ENCODE measurements at regions of chr5 and their contacts with region 1.

Region 1: DNA sequence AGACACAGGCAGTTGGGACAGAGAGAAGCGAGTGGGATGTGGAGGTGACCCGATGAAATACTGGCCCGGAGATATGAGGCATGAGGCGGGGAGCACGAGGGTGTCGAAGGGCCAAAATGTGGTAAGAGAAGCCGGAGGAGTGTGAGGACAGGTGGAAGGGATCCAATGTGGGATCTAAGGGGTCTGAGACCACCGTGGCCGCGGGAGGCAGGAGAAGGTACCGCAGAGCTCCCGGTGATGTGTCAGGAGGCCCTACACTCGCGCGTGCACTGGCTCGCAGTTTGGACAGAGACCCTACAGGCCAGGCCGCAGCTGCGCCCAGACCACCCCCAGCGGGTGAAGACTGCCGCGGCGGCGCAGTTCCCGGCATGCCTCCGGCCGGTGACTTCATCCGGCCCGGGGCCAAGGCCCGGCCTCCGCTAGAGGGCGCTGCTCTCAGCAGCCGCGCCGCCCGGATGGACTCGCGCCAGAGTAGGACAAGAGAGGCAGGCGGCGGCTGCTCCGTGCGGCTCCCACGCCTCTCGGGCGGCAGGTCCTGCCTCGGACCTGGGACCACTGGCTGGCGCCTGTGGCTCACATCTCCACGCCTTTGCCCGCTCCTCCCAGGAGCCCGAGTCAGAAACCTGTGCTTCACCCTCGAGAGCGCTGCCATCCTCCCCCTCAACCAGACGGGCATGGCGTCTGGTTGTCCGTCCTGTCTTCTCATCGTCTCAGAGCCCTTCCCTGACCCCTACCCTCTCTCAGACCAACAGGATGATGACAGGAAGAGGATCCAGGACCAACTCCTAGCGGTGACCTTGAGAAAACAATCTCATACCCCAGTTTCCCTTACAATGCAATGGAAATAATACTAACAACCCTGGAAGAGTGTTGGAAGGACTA is 35.4 kb upstream of the STING1 start:
- DNase-seq: peak; percentile 70 to 97
- H3K4me3 ChIP-seq: peak overlapping the region in 3 of 4 experiments; percentile 30 to 55 (median 34); a peak in 6 of 8 replicates
- H3K27ac ChIP-seq: 0 out of 2 replicates have a peak overlapping the region, but pooled peaks have one; percentile 48
- H3K4me1 ChIP-seq: peaks cover 3 to 19% (median 6%) of the 10 kb centered on the region in 4 experiments; a peak in 6 of 7 replicates
- H3K27me3 ChIP-seq: no peaks in the 10 kb centered on the region; a peak in 1 of 7 replicates
- CTCF ChIP-seq: peak; percentile 92 to 97 (median 92)
- EP300 ChIP-seq: no peak; a peak in 1 of 3 replicates
- POLR2A ChIP-seq: peak in 1 of 2 experiments; percentile 94; a peak in 2 of 3 replicates
- RAD21 ChIP-seq: peak; percentile 56 to 78

Region 2: GRCh38 chr5:139371482-139372435 is 146.2 kb before region 1 on chr5:
- CTCF ChIA-PET with region 1: no interaction called
- POLR2A ChIA-PET with region 1: no interaction called
- DNase-seq: no peak
- H3K4me3 ChIP-seq: no peak overlapping the region
- H3K27ac ChIP-seq: no peak overlapping the region
- H3K4me1 ChIP-seq: no peaks in the 10 kb centered on the region
- H3K27me3 ChIP-seq: no peaks in the 10 kb centered on the region
- CTCF ChIP-seq: no peak
- EP300 ChIP-seq: no peak
- POLR2A ChIP-seq: no peak
- RAD21 ChIP-seq: no peak

Region 3: DNA sequence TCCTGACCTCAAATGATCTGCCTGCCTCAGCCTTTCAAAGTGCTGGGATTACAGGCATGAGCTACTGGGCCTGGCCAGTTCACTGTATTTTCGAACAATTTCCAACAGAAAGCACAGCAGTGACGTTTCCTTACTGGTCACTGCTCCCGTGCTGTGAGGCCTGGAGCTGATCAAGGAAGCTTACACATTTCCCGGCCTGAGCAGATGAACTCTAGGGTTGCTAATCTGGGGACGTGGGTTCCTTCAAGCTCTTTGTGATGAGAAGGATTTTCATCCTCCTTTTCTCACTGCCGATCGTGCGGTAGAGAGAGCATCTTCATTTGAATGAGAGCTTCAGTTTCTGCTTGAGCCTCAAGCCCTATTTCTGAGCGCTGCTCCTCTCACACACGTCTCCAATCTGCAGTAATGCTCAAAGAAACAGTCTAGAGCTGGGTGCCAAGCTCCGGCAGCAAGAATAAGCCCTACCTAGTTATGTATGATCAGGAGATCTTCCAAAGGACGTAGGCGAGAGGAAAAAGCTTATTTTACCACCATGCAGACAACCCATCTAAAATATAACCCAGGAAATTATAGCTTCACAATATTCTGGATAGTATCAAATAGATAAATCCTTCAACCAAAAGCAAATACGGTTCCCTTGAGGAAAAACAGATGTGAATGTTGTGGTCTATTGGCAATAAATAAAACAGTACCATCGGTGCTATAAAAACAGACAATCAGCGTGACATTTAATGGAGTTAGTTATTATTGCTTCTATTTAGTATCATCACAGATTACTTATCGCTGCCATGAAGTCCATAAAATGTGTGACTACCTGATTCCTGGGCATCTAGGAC is 106.7 kb before region 1 on chr5:
- CTCF ChIA-PET with region 1: interaction called, 25 read pairs
- POLR2A ChIA-PET with region 1: interaction called, 4 read pairs
- DNase-seq: no peak
- H3K4me3 ChIP-seq: no peak overlapping the region
- H3K27ac ChIP-seq: no peak overlapping the region
- H3K4me1 ChIP-seq: no peaks in the 10 kb centered on the region
- H3K27me3 ChIP-seq: 0 out of 7 replicates have a peak, but pooled peaks cover 0 to 4% (median 0%) of the 10 kb centered on the region in 4 experiments
- CTCF ChIP-seq: no peak
- EP300 ChIP-seq: no peak
- POLR2A ChIP-seq: no peak
- RAD21 ChIP-seq: no peak

Region 4: GRCh38 chr5:139430015-139430414 is 87.9 kb before region 1 on chr5:
- CTCF ChIA-PET with region 1: interaction called, 319 read pairs
- POLR2A ChIA-PET with region 1: interaction called, 3 read pairs
- DNase-seq: no peak
- H3K4me3 ChIP-seq: no peak overlapping the region
- H3K27ac ChIP-seq: no peak overlapping the region
- H3K4me1 ChIP-seq: no peaks in the 10 kb centered on the region
- H3K27me3 ChIP-seq: no peaks in the 10 kb centered on the region
- CTCF ChIP-seq: no peak
- EP300 ChIP-seq: no peak
- POLR2A ChIP-seq: no peak
- RAD21 ChIP-seq: no peak

Region 5: DNA sequence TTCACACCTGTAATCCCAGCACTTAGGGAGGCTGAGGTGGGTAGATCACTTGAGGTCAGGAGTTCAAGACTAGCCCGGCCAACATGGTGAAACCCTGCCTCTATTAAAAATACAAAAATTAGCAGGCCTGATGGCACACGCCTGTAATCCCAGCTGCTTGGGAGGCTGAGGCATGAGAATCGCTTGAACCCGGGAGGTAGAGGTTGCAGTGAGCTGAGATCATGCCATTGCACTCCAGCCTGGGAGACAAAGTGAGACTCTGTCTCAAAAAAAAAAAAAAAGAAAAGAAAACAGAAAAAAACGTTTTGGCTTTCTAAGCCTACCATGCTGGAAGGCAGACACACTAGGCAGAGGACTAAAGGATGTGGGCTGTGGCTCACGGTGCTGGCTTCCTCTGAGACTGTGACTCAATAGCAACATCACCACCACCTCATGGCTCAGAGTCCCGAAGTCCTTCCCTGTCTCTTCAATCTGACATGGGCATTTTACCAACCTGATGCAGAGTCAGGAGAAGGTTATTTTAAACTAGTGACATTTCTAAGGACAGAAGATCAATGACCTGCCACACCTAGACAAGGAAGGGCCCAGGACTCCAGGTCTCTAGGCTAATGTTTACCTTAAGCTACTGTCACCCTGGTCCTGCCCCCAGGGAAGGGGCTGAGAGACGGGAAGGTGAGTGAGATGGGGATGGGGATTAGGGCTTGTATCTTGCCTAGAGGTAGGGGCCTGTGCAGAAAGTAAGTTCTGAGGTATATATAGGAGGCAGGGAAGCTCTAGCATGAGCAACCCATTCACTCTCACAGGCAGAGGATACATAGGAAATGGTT is 59.1 kb before region 1 on chr5:
- CTCF ChIA-PET with region 1: interaction called, 13 read pairs
- POLR2A ChIA-PET with region 1: interaction called, 3 read pairs
- DNase-seq: no peak
- H3K4me3 ChIP-seq: no peak overlapping the region
- H3K27ac ChIP-seq: no peak overlapping the region
- H3K4me1 ChIP-seq: peaks cover 5 to 15% (median 12%) of the 10 kb centered on the region in 4 experiments; a peak in 6 of 7 replicates
- H3K27me3 ChIP-seq: no peaks in the 10 kb centered on the region
- CTCF ChIP-seq: no peak
- EP300 ChIP-seq: no peak
- POLR2A ChIP-seq: no peak
- RAD21 ChIP-seq: no peak

Region 6: GRCh38 chr5:139482050-139482889 is 35.7 kb before region 1 on chr5 and contains the start of gene STING1:
- CTCF ChIA-PET with region 1: interaction called, 21 read pairs
- POLR2A ChIA-PET with region 1: interaction called, 3 read pairs
- DNase-seq: no peak
- H3K4me3 ChIP-seq: no peak within 1 kb of the TSS
- H3K27ac ChIP-seq: no peak within 1 kb of the TSS
- H3K4me1 ChIP-seq: peaks cover 0 to 10% (median 5%) of the 10 kb centered on the region in 4 experiments; a peak in 5 of 7 replicates
- H3K27me3 ChIP-seq: no peaks in the 10 kb centered on the region
- CTCF ChIP-seq: no peak
- EP300 ChIP-seq: no peak
- POLR2A ChIP-seq: no peak
- RAD21 ChIP-seq: no peak
- total RNA-seq, gene STING1: 0.26 and 0.42 TPM in 2 replicates

Region 7: DNA sequence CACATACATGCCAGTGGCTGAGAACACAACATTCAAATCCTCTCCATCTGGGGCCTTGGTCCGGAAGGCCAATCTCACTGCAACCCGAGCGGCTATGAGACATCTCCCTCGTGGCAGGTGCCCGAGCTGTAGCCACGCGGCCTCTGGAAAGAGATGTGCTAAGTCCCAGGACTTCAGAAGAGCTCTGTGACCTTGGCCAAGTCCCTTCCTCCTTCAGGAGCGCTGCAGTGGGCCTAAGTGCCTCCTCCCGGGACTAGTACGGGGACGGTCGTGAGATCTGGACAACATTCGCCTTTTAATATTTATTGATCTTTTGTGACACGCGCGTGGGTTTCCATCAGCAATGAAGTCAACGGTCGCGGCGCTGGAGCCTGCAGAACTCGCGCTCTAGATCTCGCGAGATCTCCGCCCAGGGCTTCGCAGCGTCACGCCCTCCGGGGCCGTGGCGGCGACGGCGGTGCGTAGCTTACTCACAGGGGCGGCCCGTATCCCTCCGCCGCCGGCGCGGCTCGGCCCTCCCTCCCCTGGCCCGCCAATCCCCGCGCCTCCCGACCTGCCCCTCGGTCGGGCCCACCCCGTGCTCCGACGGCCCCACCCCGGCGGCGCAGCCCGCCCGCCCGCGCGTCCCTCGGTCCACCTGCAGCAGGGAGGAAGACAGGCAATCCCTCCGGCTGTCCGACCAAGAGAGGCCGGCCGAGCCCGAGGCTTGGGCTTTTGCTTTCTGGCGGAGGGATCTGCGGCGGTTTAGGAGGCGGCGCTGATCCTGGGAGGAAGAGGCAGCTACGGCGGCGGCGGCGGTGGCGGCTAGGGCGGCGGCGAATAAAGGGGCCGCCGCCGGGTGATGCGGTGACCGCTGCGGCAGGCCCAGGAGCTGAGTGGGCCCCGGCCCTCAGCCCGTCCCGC is 43.1 kb after region 1 on chr5 and contains the start of gene UBE2D2:
- CTCF ChIA-PET with region 1: interaction called, 18 read pairs
- POLR2A ChIA-PET with region 1: interaction called, 17 read pairs
- DNase-seq: peak; percentile 90 to 97
- H3K4me3 ChIP-seq: peak within 1 kb of the TSS; percentile 65 to 98 (median 80)
- H3K27ac ChIP-seq: peak within 1 kb of the TSS; percentile 80
- H3K4me1 ChIP-seq: peaks cover 0 to 4% (median 4%) of the 10 kb centered on the region in 4 experiments; a peak in 5 of 7 replicates
- H3K27me3 ChIP-seq: no peaks in the 10 kb centered on the region
- CTCF ChIP-seq: no peak
- EP300 ChIP-seq: no peak
- POLR2A ChIP-seq: peak; percentile 49 to 86
- RAD21 ChIP-seq: peak in 1 of 2 experiments; percentile 5; a peak in 1 of 4 replicates
- total RNA-seq, gene UBE2D2: 194 and 203 TPM in 2 replicates

Region 8: GRCh38 chr5:139611703-139612584 is 94.0 kb after region 1 on chr5:
- CTCF ChIA-PET with region 1: no interaction called
- POLR2A ChIA-PET with region 1: no interaction called
- DNase-seq: no peak
- H3K4me3 ChIP-seq: no peak overlapping the region
- H3K27ac ChIP-seq: no peak overlapping the region
- H3K4me1 ChIP-seq: no peaks in the 10 kb centered on the region
- H3K27me3 ChIP-seq: no peaks in the 10 kb centered on the region
- CTCF ChIP-seq: no peak
- EP300 ChIP-seq: no peak
- POLR2A ChIP-seq: no peak
- RAD21 ChIP-seq: no peak

Region 9: GRCh38 chr5:139696894-139697658 is 179.2 kb after region 1 on chr5:
- CTCF ChIA-PET with region 1: no interaction called
- POLR2A ChIA-PET with region 1: no interaction called
- DNase-seq: no peak
- H3K4me3 ChIP-seq: peak overlapping the region; percentile 28 to 58 (median 34); a peak in 7 of 8 replicates
- H3K27ac ChIP-seq: 0 out of 2 replicates have a peak overlapping the region, but pooled peaks have one; percentile 20
- H3K4me1 ChIP-seq: peaks cover 24 to 51% (median 38%) of the 10 kb centered on the region in 4 experiments
- H3K27me3 ChIP-seq: peaks cover 0 to 4% (median under 1%) of the 10 kb centered on the region in 4 experiments; a peak in 4 of 7 replicates
- CTCF ChIP-seq: no peak
- EP300 ChIP-seq: no peak
- POLR2A ChIP-seq: peak in 1 of 2 experiments; percentile 51; a peak in 1 of 3 replicates
- RAD21 ChIP-seq: no peak